Endothelial cell of umbilical vein (primary cell): ENCODE measurements at regions of chr6 and their contacts with region 1.

Region 1: GRCh38 chr6:150981095-150981494 is 115.6 kb downstream of the MTHFD1L start:
- DNase-seq: peak; percentile 99
- H3K4me3 ChIP-seq: no peak overlapping the region
- H3K27ac ChIP-seq: peak overlapping the region; percentile 90
- H3K4me1 ChIP-seq: peaks cover 26% of the 10 kb centered on the region
- H3K27me3 ChIP-seq: no peaks in the 10 kb centered on the region
- CTCF ChIP-seq: no peak
- POLR2A ChIP-seq: no peak

Region 2: DNA sequence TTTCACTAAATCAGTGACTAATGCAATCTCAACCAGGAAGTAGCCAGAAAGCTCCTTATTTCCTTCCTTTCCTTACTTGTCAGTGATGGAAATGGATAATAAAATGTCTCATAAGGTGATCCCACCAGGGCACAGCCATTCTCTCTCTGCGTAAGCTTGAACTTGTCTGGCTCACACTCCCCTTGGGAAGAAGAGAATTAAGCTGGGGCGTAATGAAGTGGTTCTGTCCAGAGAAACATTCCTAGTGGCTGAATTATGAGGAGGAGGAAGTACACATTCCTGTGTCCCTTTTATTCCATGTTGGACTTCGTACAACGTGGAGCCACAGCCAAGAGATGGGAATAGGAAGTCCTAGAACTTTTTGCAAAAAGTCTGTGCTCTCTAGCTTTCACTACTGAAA is 21.9 kb before region 1 on chr6:
- CTCF ChIA-PET with region 1: no interaction called
- POLR2A ChIA-PET with region 1: no interaction called
- dilution Hi-C with region 1: no loop called
- intact Hi-C with region 1: loop called (anchors 1 kb)
- DNase-seq: peak; percentile 67
- H3K4me3 ChIP-seq: no peak overlapping the region
- H3K27ac ChIP-seq: peak overlapping the region; percentile 80
- H3K4me1 ChIP-seq: peaks cover 13% of the 10 kb centered on the region
- H3K27me3 ChIP-seq: no peaks in the 10 kb centered on the region
- CTCF ChIP-seq: no peak
- POLR2A ChIP-seq: no peak

Region 3: GRCh38 chr6:151004415-151005024 is 23.4 kb after region 1 on chr6:
- CTCF ChIA-PET with region 1: interaction called, 4 read pairs
- POLR2A ChIA-PET with region 1: interaction called, 3 read pairs
- dilution Hi-C with region 1: no loop called
- intact Hi-C with region 1: loop called (anchors 1 kb)
- DNase-seq: peak; percentile 100
- H3K4me3 ChIP-seq: no peak overlapping the region
- H3K27ac ChIP-seq: peak overlapping the region; percentile 94
- H3K4me1 ChIP-seq: peaks cover 41% of the 10 kb centered on the region
- H3K27me3 ChIP-seq: no peaks in the 10 kb centered on the region
- CTCF ChIP-seq: no peak
- POLR2A ChIP-seq: peak; percentile 71

Region 4: GRCh38 chr6:151036869-151037680 is 56.0 kb after region 1 on chr6:
- CTCF ChIA-PET with region 1: interaction called, 3 read pairs
- POLR2A ChIA-PET with region 1: no interaction called
- dilution Hi-C with region 1: no loop called
- intact Hi-C with region 1: loop called (anchors 1 kb)
- DNase-seq: peak; percentile 82
- H3K4me3 ChIP-seq: no peak overlapping the region
- H3K27ac ChIP-seq: peak overlapping the region; percentile 100
- H3K4me1 ChIP-seq: peaks cover 52% of the 10 kb centered on the region
- H3K27me3 ChIP-seq: no peaks in the 10 kb centered on the region
- CTCF ChIP-seq: no peak
- POLR2A ChIP-seq: peak; percentile 44

Region 5: DNA sequence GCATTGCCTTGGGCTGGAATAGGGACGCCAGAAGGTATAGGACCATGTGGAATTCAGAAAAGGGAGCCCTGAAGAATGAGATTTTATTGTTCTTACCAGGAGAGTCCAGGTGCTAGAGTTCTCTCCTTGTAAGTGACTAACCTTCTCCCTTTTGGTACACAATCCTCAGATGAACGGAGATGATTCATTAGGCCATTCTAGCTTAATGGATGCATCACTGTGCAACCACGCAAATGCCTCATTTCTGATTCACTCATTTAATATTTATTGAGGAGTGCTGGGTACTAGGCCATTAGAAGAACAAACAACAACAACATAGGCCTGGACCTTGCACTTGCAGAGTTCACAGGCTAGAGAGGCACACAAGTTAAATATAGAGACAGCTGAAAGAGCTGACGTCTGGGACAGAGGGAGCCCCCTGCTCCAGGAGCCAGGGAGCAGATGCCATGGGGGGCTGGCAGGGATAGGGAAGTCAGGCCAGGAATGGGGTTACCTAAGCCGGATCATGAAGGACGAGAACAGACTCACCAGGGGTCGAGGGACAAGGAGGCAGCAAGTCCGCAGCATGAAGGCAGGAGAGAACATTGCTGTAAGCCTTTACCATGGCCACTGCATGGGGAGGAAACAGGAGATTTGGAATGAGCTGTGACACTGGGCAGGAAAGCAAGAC is 79.1 kb after region 1 on chr6:
- CTCF ChIA-PET with region 1: interaction called, 3 read pairs
- POLR2A ChIA-PET with region 1: no interaction called
- dilution Hi-C with region 1: no loop called
- intact Hi-C with region 1: loop called (anchors 1 kb)
- DNase-seq: peak; percentile 90
- H3K4me3 ChIP-seq: no peak overlapping the region
- H3K27ac ChIP-seq: peak overlapping the region; percentile 95
- H3K4me1 ChIP-seq: peaks cover 55% of the 10 kb centered on the region
- H3K27me3 ChIP-seq: no peaks in the 10 kb centered on the region
- CTCF ChIP-seq: no peak
- POLR2A ChIP-seq: no peak

Region 6: DNA sequence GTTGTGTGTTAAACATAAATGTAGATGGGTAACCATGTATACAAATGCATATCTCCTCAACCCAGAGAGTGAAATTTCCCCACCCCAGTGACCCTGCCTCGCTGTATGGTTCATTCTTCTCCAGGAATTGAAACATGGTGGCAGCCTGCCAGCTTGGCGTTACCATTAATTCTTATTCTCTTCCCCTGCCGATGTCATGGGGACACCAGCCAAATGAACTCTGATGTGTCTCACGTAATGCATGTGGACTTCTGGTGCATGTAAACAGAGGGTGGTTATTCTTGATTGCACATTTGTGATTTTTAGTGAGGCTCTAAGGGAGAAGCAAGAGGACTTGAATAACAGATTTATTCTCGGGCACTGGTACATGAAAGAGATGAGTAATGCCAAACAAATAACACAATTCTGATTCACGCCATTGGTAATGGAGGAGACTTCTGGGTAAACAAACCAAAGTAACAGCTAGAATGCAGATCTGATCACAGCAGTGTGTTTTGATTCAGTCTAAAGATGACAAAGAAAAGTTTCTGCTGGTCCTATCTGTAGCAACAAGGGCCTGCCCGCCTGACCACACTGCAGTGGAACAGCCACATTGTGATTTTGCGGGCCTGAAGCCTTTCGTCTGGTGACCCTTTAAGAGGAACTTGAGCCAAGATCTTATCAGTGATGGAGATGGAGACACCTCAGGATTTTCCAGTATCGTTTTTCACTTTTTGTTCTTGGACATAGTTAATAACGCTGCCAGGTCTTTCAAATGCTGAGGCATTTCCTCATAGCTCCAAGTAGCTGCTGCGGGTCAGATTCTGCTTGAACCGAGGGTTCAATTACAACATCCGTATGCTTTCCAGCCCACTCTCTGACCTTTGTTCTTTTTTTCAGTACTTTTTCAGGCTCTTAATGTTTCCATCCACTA is 86.8 kb after region 1 on chr6:
- CTCF ChIA-PET with region 1: no interaction called
- POLR2A ChIA-PET with region 1: no interaction called
- dilution Hi-C with region 1: no loop called
- intact Hi-C with region 1: loop called (anchors 2 kb)
- DNase-seq: peak; percentile 99
- H3K4me3 ChIP-seq: no peak overlapping the region
- H3K27ac ChIP-seq: peak overlapping the region; percentile 90
- H3K4me1 ChIP-seq: peaks cover 61% of the 10 kb centered on the region
- H3K27me3 ChIP-seq: no peaks in the 10 kb centered on the region
- CTCF ChIP-seq: no peak
- POLR2A ChIP-seq: peak; percentile 47

Region 7: GRCh38 chr6:151240036-151240685 is 259.1 kb after region 1 on chr6:
- CTCF ChIA-PET with region 1: no interaction called
- POLR2A ChIA-PET with region 1: interaction called, 3 read pairs
- dilution Hi-C with region 1: no loop called
- intact Hi-C with region 1: loop called (anchors 1 kb)
- DNase-seq: peak; percentile 73
- H3K4me3 ChIP-seq: peak overlapping the region; percentile 64 to 96 (median 69)
- H3K27ac ChIP-seq: peak overlapping the region; percentile 59
- H3K4me1 ChIP-seq: peaks cover 30% of the 10 kb centered on the region
- H3K27me3 ChIP-seq: no peaks in the 10 kb centered on the region
- CTCF ChIP-seq: peak in 1 of 2 donors; percentile 17
- POLR2A ChIP-seq: peak; percentile 79